Activated B cell treated with CpG ODN at 0.5 μM for 24 hours (primary cell): ENCODE measurements at regions of chr6 and their contacts with region 1.

Region 1: GRCh38 chr6:33000055-33000454 is 9.3 kb downstream of the HLA-DOA start:
- DNase-seq: no peak
- ATAC-seq: peak; percentile 92
- H3K4me3 Mint-ChIP-seq: peak overlapping the region; percentile 47
- H3K27ac Mint-ChIP-seq: peak overlapping the region; percentile 79
- H3K4me1 Mint-ChIP-seq: peaks cover 12% of the 10 kb centered on the region
- H3K27me3 Mint-ChIP-seq: no peaks in the 10 kb centered on the region
- CTCF ChIP-seq: no peak

Region 2: DNA sequence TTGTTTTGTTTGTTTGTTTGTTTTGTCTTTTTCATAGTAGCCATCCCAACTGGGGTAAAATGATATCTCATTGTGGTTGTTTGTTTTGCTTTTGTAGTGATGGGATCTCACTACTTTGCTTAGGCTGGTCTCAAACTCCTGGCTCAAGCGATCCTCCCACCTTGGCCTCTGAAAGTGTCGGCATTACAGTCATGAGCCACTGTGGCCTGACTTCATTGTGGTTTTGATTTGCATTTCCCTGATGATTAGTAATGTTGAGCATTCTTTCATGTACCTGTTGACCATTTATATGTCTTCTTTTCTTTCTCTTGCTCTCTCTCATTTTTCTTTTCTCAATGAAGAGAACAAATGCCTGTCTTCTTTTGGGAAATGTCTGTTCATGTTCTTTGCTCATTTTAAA is 40.1 kb after region 1 on chr6:
- CTCF ChIA-PET with region 1: no interaction called
- POLR2A ChIA-PET with region 1: no interaction called
- intact Hi-C with region 1: no loop called
- DNase-seq: no peak
- ATAC-seq: no peak
- H3K4me3 Mint-ChIP-seq: no peak overlapping the region
- H3K27ac Mint-ChIP-seq: peak overlapping the region; percentile 53
- H3K4me1 Mint-ChIP-seq: peaks cover 10% of the 10 kb centered on the region
- H3K27me3 Mint-ChIP-seq: no peaks in the 10 kb centered on the region
- CTCF ChIP-seq: no peak

Region 3: GRCh38 chr6:33082702-33083101 is 82.6 kb after region 1 on chr6:
- CTCF ChIA-PET with region 1: interaction called, 4 read pairs
- POLR2A ChIA-PET with region 1: interaction called, 19 read pairs
- intact Hi-C with region 1: no loop called
- DNase-seq: no peak
- ATAC-seq: peak; percentile 54
- H3K4me3 Mint-ChIP-seq: peak overlapping the region; percentile 89
- H3K27ac Mint-ChIP-seq: peak overlapping the region; percentile 78
- H3K4me1 Mint-ChIP-seq: peaks cover 74% of the 10 kb centered on the region
- H3K27me3 Mint-ChIP-seq: no peaks in the 10 kb centered on the region
- CTCF ChIP-seq: no peak

Region 4: GRCh38 chr6:33126101-33126714 is 126.2 kb after region 1 on chr6:
- CTCF ChIA-PET with region 1: interaction called, 34 read pairs
- POLR2A ChIA-PET with region 1: interaction called, 6 read pairs
- intact Hi-C with region 1: loop called (anchors 1 kb)
- DNase-seq: peak; percentile 59
- ATAC-seq: peak; percentile 73
- H3K4me3 Mint-ChIP-seq: no peak overlapping the region
- H3K27ac Mint-ChIP-seq: no peak overlapping the region
- H3K4me1 Mint-ChIP-seq: peaks cover 4% of the 10 kb centered on the region
- H3K27me3 Mint-ChIP-seq: no peaks in the 10 kb centered on the region
- CTCF ChIP-seq: no peak

Region 5: GRCh38 chr6:33172688-33173534 is 172.9 kb after region 1 on chr6:
- CTCF ChIA-PET with region 1: interaction called, 7 read pairs
- POLR2A ChIA-PET with region 1: no interaction called
- intact Hi-C with region 1: loop called (anchors 1 kb)
- DNase-seq: no peak
- ATAC-seq: peak; percentile 41
- H3K4me3 Mint-ChIP-seq: no peak overlapping the region
- H3K27ac Mint-ChIP-seq: no peak overlapping the region
- H3K4me1 Mint-ChIP-seq: peaks cover 16% of the 10 kb centered on the region
- H3K27me3 Mint-ChIP-seq: peaks cover 11% of the 10 kb centered on the region
- CTCF ChIP-seq: no peak

Region 6: GRCh38 chr6:33313709-33314514 is 313.9 kb after region 1 on chr6 and contains the start of gene TAPBP:
- CTCF ChIA-PET with region 1: no interaction called
- POLR2A ChIA-PET with region 1: no interaction called
- intact Hi-C with region 1: no loop called
- DNase-seq: peak; percentile 78
- ATAC-seq: peak; percentile 56
- H3K4me3 Mint-ChIP-seq: peak within 1 kb of the TSS; percentile 99
- H3K27ac Mint-ChIP-seq: peak within 1 kb of the TSS; percentile 97
- H3K4me1 Mint-ChIP-seq: peaks cover 69% of the 10 kb centered on the region
- H3K27me3 Mint-ChIP-seq: no peaks in the 10 kb centered on the region
- CTCF ChIP-seq: no peak
- total RNA-seq, gene TAPBP: 319 and 350 TPM in 2 replicates